ENCODE measurements at regions of chr5 and their contacts with region 1.

Region 1: GRCh38 chr5:143824851-143825720 is 13.1 kb downstream of the HMHB1 start:
- DNase-seq: peak; percentile 95
- H3K4me3 Mint-ChIP-seq: no peak overlapping the region
- H3K27ac Mint-ChIP-seq: no peak overlapping the region
- H3K4me1 Mint-ChIP-seq: peaks cover 12% of the 10 kb centered on the region
- H3K27me3 Mint-ChIP-seq: no peaks in the 10 kb centered on the region

Region 2: DNA sequence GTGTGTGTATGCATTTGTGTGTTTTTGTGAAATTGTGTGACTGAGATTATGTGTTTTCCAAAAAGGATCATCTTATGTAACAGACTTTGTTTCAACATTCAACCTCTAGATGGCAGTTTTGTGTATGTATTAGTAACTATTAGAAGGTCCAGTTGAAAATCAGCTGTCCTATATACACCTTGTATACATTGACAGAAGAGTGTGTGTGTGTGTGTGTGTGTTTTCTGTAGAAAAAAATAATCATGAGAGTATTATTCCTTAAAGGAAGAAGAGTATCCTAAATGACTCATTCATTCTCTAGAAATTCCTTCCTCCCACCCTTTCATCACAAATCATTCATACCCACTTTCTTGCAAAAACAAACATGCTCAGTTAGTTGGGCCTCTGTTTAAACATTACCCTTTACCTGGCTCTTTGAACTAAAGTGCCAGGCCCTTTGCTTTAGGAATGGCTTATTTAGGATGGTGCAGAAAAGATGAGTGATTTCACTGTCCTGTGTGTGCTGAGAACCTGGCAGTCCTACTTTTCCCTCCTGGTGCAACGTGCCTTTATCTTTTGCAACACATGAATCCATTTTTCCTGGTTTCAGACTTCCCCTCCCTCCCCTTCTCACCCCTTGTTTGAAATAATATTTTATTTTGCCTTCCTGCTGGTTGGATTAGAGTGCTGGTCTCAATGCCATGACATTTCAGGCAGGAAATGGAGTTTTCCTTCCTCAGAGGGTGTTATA is 902.7 kb before region 1 on chr5:
- intact Hi-C with region 1: loop called (anchors 1 kb)
- DNase-seq: no peak
- H3K4me3 Mint-ChIP-seq: no peak overlapping the region
- H3K27ac Mint-ChIP-seq: no peak overlapping the region
- H3K4me1 Mint-ChIP-seq: peaks cover 36% of the 10 kb centered on the region
- H3K27me3 Mint-ChIP-seq: no peaks in the 10 kb centered on the region

Region 3: DNA sequence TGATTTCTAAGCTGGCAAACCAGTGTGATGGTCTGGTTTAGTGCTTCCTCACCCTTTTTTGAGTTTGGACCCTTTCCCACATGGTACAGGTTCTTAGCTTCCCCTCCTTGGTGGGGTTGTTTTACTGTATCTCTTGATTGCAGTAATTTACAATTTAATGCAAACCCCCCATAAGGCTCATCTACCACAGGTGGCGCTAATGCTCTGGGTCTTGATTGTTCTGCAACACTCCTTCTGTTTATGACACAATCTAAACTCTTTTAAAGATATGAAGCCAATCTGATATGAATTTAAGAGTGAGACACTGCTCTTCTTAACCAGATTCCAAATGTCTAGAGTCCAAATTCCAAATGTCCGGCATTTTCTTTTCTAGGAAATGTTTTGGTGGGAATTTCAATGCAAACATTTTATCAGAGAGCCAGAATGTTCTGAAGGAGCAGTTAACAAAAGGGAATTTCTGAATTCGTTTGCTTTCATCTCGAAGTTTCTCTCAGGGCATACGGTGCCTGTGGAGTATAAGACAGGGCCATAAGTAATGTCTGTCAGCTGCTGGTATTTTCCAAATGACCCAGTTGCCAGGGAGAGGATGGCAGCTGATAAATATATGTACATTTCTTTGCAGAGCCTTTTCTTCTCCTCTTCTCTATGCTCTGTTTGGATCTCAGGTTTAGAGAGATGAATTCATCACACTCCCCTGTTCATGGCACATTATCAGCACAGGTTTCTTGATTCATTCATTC is 808.1 kb before region 1 on chr5:
- intact Hi-C with region 1: loop called (anchors 1 kb)
- DNase-seq: peak; percentile 82
- H3K4me3 Mint-ChIP-seq: no peak overlapping the region
- H3K27ac Mint-ChIP-seq: no peak overlapping the region
- H3K4me1 Mint-ChIP-seq: peaks cover 37% of the 10 kb centered on the region
- H3K27me3 Mint-ChIP-seq: no peaks in the 10 kb centered on the region

Region 4: GRCh38 chr5:143213851-143214363 is 611.2 kb before region 1 on chr5:
- intact Hi-C with region 1: loop called (anchors 10 kb)
- DNase-seq: no peak
- H3K4me3 Mint-ChIP-seq: peak overlapping the region; percentile 24
- H3K27ac Mint-ChIP-seq: peak overlapping the region; percentile 76
- H3K4me1 Mint-ChIP-seq: peaks cover 28% of the 10 kb centered on the region
- H3K27me3 Mint-ChIP-seq: no peaks in the 10 kb centered on the region

Region 5: DNA sequence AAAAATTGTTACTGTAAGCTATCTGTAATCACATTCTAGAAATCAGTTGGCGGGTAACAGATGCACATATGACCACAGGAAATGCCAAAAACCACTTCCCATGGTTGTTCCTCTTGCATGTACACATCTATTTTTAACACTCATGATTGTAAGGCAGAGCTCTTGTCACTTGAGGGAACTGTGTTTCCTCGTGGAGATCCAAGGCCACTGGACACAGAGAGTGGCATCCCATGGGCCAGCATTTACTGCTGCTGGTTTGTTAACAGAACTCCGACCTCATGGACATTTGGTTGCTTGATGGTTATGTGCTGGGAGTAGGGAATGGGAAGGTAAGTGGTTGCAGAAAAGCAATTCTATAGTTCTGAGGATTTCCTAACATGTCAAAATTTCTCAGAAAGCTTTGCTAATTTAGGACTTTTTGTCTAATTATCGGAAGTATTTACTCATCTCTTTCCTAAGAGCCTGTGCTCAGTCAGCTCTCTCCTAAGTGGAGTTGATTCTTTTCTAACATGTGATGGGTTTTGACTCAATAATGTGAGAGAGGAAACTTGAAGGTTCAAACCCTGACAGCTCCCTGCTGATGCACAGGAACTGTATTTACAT is 219.6 kb before region 1 on chr5:
- intact Hi-C with region 1: loop called (anchors 2 kb)
- DNase-seq: peak; percentile 83
- H3K4me3 Mint-ChIP-seq: peak overlapping the region; percentile 68
- H3K27ac Mint-ChIP-seq: peak overlapping the region; percentile 94
- H3K4me1 Mint-ChIP-seq: peaks cover 31% of the 10 kb centered on the region
- H3K27me3 Mint-ChIP-seq: peaks cover 4% of the 10 kb centered on the region

Region 6: GRCh38 chr5:143896966-143897365 is 71.9 kb after region 1 on chr5:
- intact Hi-C with region 1: loop called (anchors 2 kb)
- DNase-seq: peak; percentile 58
- H3K4me3 Mint-ChIP-seq: no peak overlapping the region
- H3K27ac Mint-ChIP-seq: no peak overlapping the region
- H3K4me1 Mint-ChIP-seq: peaks cover 26% of the 10 kb centered on the region
- H3K27me3 Mint-ChIP-seq: no peaks in the 10 kb centered on the region

Measured in activated CD4-positive, alpha-beta T cell treated with anti-CD3 and anti-CD28 coated beads, Interleukin-2, amount 10 ng/mL, durations not matched to agents 24 days and 14 days (primary cell).